ENCODE measurements at regions of chr16 and their contacts with region 1.

Region 1: GRCh38 chr16:4500272-4500671 is 24.1 kb downstream of the HMOX2 start:
- DNase-seq: no peak
- ATAC-seq: no peak
- H3K4me3 ChIP-seq: no peak overlapping the region
- H3K27ac ChIP-seq: no peak overlapping the region
- H3K4me1 ChIP-seq: peaks cover 6% of the 10 kb centered on the region
- H3K27me3 ChIP-seq: no peaks in the 10 kb centered on the region
- CTCF ChIP-seq: no peak
- EP300 ChIP-seq: no peak
- POLR2A ChIP-seq: no peak
- RAD21 ChIP-seq: no peak

Region 2: DNA sequence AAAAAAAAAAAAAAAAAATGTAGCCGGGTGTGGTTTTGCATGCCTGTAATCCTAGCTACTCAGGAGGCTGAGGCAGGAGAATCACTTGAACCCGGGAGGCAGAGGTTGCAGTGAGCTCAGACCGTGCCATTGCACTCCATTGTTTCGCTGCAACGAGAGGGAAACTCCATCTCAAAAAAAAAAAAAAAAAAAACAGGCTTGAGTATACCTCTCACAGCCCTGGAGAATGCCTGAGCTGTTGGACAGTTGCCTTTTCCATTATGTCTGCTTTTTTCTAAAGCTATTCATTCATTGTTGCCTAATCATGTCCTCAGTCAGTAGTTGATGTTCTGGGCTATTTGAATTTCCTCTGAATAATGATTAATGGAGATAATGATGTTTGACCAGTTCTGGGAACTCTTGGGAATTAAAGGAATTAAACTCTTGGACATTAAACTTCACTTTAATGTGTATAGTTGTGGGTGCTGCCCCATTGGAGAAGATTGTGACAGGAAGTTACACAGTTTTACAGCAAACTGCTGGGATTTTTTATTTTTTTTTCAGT is 12.2 kb before region 1 on chr16:
- CTCF ChIA-PET with region 1: interaction called, 9 read pairs
- POLR2A ChIA-PET with region 1: interaction called, 5 read pairs
- RAD21 ChIA-PET with region 1: interaction called, 5 read pairs
- SMC1A ChIA-PET with region 1: interaction called, 12 read pairs
- in situ Hi-C with region 1: no loop called
- intact Hi-C with region 1: no loop called
- DNase-seq: no peak
- ATAC-seq: no peak
- H3K4me3 ChIP-seq: no peak overlapping the region
- H3K27ac ChIP-seq: no peak overlapping the region
- H3K4me1 ChIP-seq: no peaks in the 10 kb centered on the region
- H3K27me3 ChIP-seq: no peaks in the 10 kb centered on the region
- CTCF ChIP-seq: no peak
- EP300 ChIP-seq: no peak
- POLR2A ChIP-seq: no peak
- RAD21 ChIP-seq: no peak

Region 3: DNA sequence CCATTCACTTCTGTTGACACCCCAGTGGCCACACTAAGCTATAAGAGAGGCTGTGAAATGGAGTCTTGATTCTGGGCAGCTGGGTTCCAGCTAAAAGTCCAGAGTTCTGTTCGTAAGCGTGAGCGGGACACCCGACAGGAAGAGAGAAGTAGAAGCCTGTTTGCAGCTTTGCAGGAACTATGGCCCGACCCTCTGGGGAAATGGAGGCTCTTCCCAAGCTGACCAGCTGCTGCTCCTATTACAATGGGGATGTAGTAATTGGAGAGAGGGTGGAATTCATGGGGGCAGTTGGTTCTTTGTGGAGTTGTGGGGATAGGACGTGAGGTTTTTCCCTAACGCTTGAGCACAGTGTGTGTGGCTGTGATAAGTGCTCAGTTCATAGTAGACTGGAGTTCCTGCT is 86.0 kb after region 1 on chr16:
- CTCF ChIA-PET with region 1: interaction called, 52 read pairs
- POLR2A ChIA-PET with region 1: interaction called, 7 read pairs
- RAD21 ChIA-PET with region 1: interaction called, 17 read pairs
- SMC1A ChIA-PET with region 1: interaction called, 18 read pairs
- in situ Hi-C with region 1: no loop called
- intact Hi-C with region 1: no loop called
- DNase-seq: no peak
- ATAC-seq: no peak
- H3K4me3 ChIP-seq: no peak overlapping the region
- H3K27ac ChIP-seq: no peak overlapping the region
- H3K4me1 ChIP-seq: no peaks in the 10 kb centered on the region
- H3K27me3 ChIP-seq: no peaks in the 10 kb centered on the region; a peak in 1 of 4 replicates
- CTCF ChIP-seq: no peak
- EP300 ChIP-seq: no peak
- POLR2A ChIP-seq: no peak
- RAD21 ChIP-seq: no peak